ENCODE measurements at regions of chr11 and their contacts with region 1.

Region 1: DNA sequence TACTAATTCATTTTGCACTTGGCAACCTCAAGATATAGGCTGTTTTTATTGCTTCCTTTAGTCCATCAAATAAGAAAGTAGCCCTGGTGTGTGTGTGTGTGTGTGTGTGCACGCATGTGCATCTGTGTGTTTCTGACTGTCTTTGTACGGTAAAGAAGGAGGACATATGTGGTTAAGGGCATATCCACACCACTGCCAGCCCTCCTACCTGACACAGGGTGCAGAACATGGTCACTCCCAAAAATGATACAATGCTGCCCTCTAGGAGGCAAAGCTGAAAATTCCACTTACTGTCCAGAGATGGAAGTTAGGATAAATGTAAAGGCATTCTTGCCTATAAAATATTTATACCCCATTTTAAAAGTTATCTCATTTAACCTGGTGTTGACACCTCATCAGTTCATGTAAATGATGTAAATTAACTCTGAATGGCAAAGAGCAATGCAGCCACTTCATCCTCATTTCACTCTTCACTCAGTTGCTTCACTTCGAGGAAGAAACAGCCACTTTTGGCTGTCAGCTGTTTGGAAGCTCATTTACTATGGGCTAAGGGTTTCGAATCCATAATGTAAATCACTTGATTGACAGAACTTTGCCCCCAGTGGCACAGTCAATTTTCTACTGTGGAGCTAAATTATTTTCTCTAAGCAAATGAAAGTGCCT is 83.1 kb upstream of the MTNR1B start:
- DNase-seq: peak; percentile 76
- H3K4me3 Mint-ChIP-seq: no peak overlapping the region
- H3K27ac Mint-ChIP-seq: no peak overlapping the region
- H3K4me1 Mint-ChIP-seq: no peaks in the 10 kb centered on the region
- H3K27me3 Mint-ChIP-seq: no peaks in the 10 kb centered on the region
- CTCF ChIP-seq: peak; percentile 80

Region 2: DNA sequence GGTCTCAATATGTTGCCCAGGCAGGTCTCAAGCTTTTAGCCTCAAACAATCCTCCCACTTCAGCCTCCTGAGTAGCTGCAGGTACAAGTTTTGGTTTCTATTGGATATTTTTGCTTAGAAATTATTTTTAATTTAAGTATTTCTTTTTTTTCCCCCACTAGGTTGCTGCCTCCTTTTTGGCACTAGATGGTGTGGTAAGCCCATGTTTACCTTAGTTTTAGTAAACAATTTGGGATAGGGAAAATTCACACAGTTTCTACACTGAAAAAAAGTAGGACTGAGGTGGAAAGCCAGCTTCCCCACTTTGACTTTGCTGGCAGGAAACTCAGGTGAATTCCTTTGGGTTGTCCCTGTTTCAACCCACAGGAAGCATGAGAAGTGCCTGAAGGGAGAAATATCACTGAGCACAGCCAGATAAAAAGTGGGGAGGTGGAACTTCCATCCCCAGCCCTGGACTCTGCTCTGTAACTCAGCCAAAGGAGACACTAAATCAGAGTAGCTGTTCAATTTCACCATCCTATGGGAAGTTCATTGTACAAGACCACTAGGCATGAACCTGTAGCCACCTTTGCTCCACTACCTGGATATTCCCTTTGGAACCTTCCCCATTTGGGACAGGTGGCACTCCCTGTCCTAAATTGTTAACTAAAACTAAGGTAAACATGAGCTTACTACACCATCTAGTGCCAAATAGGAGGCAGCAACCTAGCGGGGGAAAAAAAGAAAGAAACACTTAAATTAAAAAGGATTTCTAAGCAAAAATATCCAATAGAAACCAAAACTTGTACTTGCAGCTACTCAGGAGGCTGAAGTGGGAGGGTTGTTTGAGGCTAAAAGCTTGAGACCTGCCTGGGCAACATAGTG is 816.1 kb before region 1 on chr11:
- CTCF ChIA-PET with region 1: interaction called, 6 read pairs
- POLR2A ChIA-PET with region 1: no interaction called
- intact Hi-C with region 1: loop called (anchors 5 kb)
- DNase-seq: no peak
- H3K4me3 Mint-ChIP-seq: no peak overlapping the region
- H3K27ac Mint-ChIP-seq: no peak overlapping the region
- H3K4me1 Mint-ChIP-seq: no peaks in the 10 kb centered on the region
- H3K27me3 Mint-ChIP-seq: no peaks in the 10 kb centered on the region
- CTCF ChIP-seq: no peak

Region 3: DNA sequence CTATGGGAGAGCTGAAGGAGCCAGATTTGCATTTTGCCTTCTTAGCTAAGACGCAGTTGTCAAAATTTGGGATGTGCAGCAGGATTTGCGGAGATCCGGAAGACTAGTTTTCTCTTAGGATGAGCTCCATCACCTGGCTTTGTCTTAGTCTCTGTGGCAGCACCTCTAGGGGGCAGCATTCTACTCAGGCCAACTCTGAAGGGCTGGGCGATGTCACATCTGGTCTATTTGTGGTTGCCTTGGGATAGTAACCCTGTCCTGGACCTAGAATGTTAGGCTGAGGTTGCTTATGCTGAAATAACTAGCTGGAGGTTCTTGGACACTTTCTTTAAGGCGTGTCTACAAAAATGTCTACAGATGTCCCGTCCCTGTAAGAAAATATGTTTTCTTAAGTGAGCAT is 545.5 kb before region 1 on chr11:
- CTCF ChIA-PET with region 1: interaction called, 3 read pairs
- POLR2A ChIA-PET with region 1: no interaction called
- intact Hi-C with region 1: loop called (anchors 5 kb)
- DNase-seq: peak; percentile 63
- H3K4me3 Mint-ChIP-seq: no peak overlapping the region
- H3K27ac Mint-ChIP-seq: no peak overlapping the region
- H3K4me1 Mint-ChIP-seq: peaks cover 15% of the 10 kb centered on the region
- H3K27me3 Mint-ChIP-seq: no peaks in the 10 kb centered on the region
- CTCF ChIP-seq: peak; percentile 58

Region 4: GRCh38 chr11:92735039-92735438 is 151.3 kb before region 1 on chr11:
- CTCF ChIA-PET with region 1: interaction called, 7 read pairs
- POLR2A ChIA-PET with region 1: no interaction called
- intact Hi-C with region 1: loop called (anchors 5 kb)
- DNase-seq: peak; percentile 30
- H3K4me3 Mint-ChIP-seq: no peak overlapping the region
- H3K27ac Mint-ChIP-seq: no peak overlapping the region
- H3K4me1 Mint-ChIP-seq: peaks cover 12% of the 10 kb centered on the region
- H3K27me3 Mint-ChIP-seq: peaks cover 19% of the 10 kb centered on the region
- CTCF ChIP-seq: peak; percentile 46

Region 5: DNA sequence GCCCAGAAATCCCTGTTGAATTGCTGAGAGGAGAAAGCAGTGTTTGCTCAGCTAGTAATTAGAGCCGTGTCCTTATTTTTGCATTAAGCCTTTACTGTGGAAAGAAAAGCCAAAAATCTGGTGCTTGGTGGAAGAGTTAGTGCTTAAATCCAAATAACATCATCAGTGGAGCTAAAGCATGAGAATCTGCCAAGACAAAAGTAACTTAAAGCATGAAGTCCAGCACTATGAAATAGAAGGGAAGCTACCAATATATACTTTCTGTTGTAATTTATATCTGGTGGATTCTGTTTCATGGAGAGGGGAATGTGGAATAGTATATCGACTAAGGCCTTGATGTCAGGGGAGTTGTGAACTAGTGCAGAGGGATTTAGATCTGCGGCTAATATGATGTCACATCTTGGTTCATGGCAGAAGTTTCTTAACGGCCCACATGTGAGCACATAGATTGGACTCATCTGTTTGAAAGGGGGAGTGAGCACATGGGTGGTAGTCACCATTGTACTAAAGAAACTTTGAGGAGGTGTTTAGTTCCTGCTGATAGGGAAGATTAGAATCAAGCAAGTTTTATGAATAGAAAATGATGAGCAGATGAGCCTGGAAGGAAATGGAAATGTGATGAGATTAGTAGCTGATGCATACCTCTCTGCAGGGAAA is 141.3 kb before region 1 on chr11:
- CTCF ChIA-PET with region 1: no interaction called
- POLR2A ChIA-PET with region 1: no interaction called
- intact Hi-C with region 1: no loop called
- DNase-seq: no peak
- H3K4me3 Mint-ChIP-seq: no peak overlapping the region
- H3K27ac Mint-ChIP-seq: no peak overlapping the region
- H3K4me1 Mint-ChIP-seq: no peaks in the 10 kb centered on the region
- H3K27me3 Mint-ChIP-seq: no peaks in the 10 kb centered on the region
- CTCF ChIP-seq: no peak

Region 6: DNA sequence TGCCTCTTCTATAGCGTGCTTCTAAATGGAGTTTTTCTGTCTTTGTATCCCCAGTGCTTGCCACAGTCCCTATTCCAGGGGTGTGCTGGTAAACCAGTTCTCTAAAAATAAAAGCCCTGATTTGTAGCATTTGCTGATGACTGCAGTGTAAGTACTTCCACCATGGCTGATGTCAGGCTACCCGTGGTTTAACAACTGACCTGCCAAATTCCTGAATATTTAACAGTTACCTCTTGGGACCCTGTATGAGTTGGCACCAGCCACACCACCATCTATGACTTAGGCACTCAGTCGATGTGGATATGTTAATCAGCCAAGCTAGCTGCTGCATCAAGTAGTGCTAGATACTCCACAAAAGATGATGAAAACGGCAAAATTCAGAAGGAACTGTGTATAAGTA is 10.9 kb before region 1 on chr11:
- CTCF ChIA-PET with region 1: interaction called, 32 read pairs
- POLR2A ChIA-PET with region 1: interaction called, 3 read pairs
- intact Hi-C with region 1: no loop called
- DNase-seq: no peak
- H3K4me3 Mint-ChIP-seq: no peak overlapping the region
- H3K27ac Mint-ChIP-seq: no peak overlapping the region
- H3K4me1 Mint-ChIP-seq: peaks cover 7% of the 10 kb centered on the region
- H3K27me3 Mint-ChIP-seq: no peaks in the 10 kb centered on the region
- CTCF ChIP-seq: no peak

Region 7: GRCh38 chr11:92993004-92993403 is 106.6 kb after region 1 on chr11:
- CTCF ChIA-PET with region 1: no interaction called
- POLR2A ChIA-PET with region 1: no interaction called
- intact Hi-C with region 1: no loop called
- DNase-seq: no peak
- H3K4me3 Mint-ChIP-seq: no peak overlapping the region
- H3K27ac Mint-ChIP-seq: no peak overlapping the region
- H3K4me1 Mint-ChIP-seq: no peaks in the 10 kb centered on the region
- H3K27me3 Mint-ChIP-seq: no peaks in the 10 kb centered on the region
- CTCF ChIP-seq: no peak

Region 8: DNA sequence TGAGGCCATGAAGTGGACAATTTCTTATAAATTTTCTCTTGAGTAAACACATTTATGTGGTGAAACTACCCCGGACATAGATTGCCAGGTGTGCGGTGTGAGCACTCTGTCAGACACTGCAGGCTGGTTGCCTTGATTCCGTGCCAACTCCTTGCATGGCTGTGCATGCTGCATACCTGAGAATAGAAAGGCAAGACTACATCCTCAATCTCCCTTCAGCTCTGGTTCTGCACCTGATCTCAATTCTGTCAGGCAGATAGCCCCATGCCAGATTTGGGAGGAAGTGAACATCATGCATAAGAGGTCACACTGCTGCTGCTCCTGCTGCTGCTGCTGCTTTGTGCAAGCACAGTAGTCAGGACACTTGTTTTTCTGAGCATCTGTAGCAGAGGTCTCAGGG is 401.7 kb after region 1 on chr11:
- CTCF ChIA-PET with region 1: no interaction called
- POLR2A ChIA-PET with region 1: no interaction called
- intact Hi-C with region 1: no loop called
- DNase-seq: no peak
- H3K4me3 Mint-ChIP-seq: no peak overlapping the region
- H3K27ac Mint-ChIP-seq: no peak overlapping the region
- H3K4me1 Mint-ChIP-seq: no peaks in the 10 kb centered on the region
- H3K27me3 Mint-ChIP-seq: no peaks in the 10 kb centered on the region
- CTCF ChIP-seq: no peak